ENCODE measurements at regions of chr22 and their contacts with region 1.

Region 1: DNA sequence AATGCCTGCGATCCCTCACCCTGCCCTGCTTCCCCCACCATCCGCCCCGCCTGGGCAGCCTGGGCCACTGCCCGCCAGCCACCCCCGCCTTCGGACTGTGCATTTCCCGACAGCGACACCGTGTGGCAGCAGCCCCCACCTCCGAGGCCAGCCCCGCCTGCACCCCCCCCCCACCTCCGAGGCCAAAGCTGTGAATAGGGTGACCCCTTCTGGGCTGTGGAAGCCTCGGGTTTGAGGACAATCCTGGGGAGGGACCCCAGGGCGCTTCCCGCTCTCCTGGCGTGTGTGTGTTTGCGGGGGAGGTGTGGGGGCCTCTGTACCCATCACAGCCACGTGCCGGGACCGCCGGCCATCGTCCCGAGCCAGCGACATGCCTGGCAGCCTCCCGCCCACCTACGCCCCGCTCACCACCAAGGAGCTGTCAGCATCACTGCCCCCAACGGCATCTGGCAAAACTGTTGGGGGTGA is 33.8 kb upstream of the PPARA start:
- DNase-seq: peak; percentile 97
- H3K4me3 ChIP-seq: no peak overlapping the region
- H3K27ac ChIP-seq: peak overlapping the region; percentile 75 to 92 (median 86)
- H3K4me1 ChIP-seq: peaks cover 0 to 73% (median 65%) of the 10 kb centered on the region in 4 donors
- H3K27me3 ChIP-seq: no peaks in the 10 kb centered on the region
- CTCF ChIP-seq: peak; percentile 94 to 98 (median 95)
- EP300 ChIP-seq: no peak
- POLR2A ChIP-seq: no peak

Region 2: GRCh38 chr22:45671768-45672563 is 444.6 kb before region 1 on chr22 and contains the start of gene ATXN10:
- intact Hi-C with region 1: loop called (anchors 10 kb)
- DNase-seq: peak; percentile 78
- H3K4me3 ChIP-seq: peak within 1 kb of the TSS; percentile 74 to 85 (median 81)
- H3K27ac ChIP-seq: peak within 1 kb of the TSS; percentile 76 to 88 (median 87)
- H3K4me1 ChIP-seq: peaks cover 0 to 45% (median 22%) of the 10 kb centered on the region in 4 donors
- H3K27me3 ChIP-seq: no peaks in the 10 kb centered on the region
- CTCF ChIP-seq: no peak
- EP300 ChIP-seq: no peak
- POLR2A ChIP-seq: peak in 1 of 2 donors; percentile 16
- total RNA-seq, gene ATXN10: 160 to 187 (median 185) TPM

Region 3: DNA sequence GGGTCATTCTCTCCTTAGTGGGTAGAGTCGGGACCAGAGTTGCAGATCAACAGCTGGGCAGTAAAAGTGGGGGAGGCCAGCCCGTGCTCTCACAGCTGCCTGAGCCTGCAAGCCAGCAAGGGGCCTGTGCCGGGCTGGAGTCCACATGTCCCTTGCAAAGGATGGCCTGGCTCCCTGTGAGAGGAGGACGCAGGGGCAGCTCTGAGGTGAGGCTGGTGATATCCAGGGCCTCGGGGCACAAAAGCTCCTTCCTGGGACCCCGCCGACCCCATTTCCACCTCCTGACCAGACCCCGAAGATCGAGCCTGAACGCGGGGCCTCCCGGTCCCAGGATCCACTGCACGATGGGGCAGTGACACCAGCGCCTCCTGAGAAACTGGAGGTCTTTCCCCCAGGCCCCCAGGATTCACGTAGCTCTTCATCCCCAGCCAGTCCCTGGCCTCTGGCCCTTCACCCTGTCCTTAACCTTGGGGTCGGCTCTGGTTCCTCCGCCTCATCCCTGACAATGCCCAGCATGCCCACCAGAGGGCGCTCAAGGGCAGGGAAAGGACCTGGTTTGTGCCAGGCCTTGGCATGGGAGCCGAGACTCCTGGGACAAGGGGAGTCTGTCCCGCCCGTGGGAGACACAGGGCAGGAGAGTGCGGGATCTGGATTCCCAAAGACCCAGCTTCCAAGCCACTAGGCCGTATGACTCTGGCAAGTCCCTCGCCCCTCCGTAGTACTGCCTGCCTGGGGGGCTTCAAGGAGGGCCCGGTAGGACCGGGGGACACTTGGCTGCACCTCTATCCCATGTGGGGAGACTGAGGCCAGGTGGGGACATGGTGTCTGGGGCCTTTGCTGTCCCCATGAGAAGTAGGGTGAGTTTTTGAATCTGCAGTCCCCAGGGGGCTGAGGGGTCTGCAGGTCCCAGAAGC is 121.8 kb before region 1 on chr22:
- intact Hi-C with region 1: loop called (anchors 2 kb)
- DNase-seq: peak; percentile 91
- H3K4me3 ChIP-seq: no peak overlapping the region
- H3K27ac ChIP-seq: peak overlapping the region in 2 of 4 donors; percentile 85
- H3K4me1 ChIP-seq: peaks cover 0 to 50% (median 47%) of the 10 kb centered on the region in 4 donors
- H3K27me3 ChIP-seq: no peaks in the 10 kb centered on the region
- CTCF ChIP-seq: peak; percentile 95 to 99 (median 97)
- EP300 ChIP-seq: no peak
- POLR2A ChIP-seq: no peak

Region 4: DNA sequence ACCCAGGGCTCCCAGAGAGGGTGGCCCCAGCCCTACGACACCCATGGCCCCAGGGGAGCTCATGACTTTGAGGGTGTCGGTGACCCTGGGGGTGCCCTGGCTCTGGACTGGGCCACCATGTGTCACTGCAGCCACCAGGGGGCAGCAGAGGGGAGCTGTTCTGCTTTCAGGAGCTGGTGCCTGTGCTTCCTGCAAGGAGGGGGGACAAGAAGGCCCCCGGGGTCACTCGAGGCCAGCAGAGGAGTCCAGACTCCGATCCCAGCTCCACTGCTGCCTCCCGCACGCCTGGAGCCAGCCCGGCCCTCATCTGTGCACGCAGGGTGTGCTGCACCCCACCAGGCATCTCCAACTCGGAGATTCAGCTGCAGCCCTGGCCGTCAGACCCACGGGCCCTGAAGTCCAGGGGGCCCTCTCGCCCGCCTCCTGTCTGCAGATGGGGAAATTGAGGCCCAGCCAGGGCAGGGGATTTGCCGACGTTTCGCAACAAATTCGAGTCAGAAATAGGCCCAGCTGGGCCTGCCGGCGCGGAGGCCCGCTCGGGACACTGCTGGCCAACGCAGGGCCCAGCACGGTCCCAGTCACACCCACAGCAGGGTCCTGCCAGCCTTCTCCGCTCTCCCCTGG is 110.0 kb before region 1 on chr22:
- intact Hi-C with region 1: loop called (anchors 1 kb)
- DNase-seq: peak; percentile 98
- H3K4me3 ChIP-seq: peak overlapping the region in 2 of 4 donors; percentile 10 to 17
- H3K27ac ChIP-seq: peak overlapping the region; percentile 91 to 99 (median 96)
- H3K4me1 ChIP-seq: peaks cover 0 to 33% (median 27%) of the 10 kb centered on the region in 4 donors
- H3K27me3 ChIP-seq: no peaks in the 10 kb centered on the region
- CTCF ChIP-seq: peak; percentile 96 to 98 (median 97)
- EP300 ChIP-seq: no peak
- POLR2A ChIP-seq: no peak

Region 5: GRCh38 chr22:46035742-46036557 is 80.6 kb before region 1 on chr22:
- intact Hi-C with region 1: loop called (anchors 2 kb)
- DNase-seq: peak; percentile 100
- H3K4me3 ChIP-seq: peak overlapping the region; percentile 76 to 86 (median 81)
- H3K27ac ChIP-seq: peak overlapping the region; percentile 95 to 98 (median 97)
- H3K4me1 ChIP-seq: peaks cover 0 to 16% (median 13%) of the 10 kb centered on the region in 4 donors
- H3K27me3 ChIP-seq: no peaks in the 10 kb centered on the region
- CTCF ChIP-seq: no peak
- EP300 ChIP-seq: peak in 1 of 4 donors; percentile 52
- POLR2A ChIP-seq: peak; percentile 97

Region 6: DNA sequence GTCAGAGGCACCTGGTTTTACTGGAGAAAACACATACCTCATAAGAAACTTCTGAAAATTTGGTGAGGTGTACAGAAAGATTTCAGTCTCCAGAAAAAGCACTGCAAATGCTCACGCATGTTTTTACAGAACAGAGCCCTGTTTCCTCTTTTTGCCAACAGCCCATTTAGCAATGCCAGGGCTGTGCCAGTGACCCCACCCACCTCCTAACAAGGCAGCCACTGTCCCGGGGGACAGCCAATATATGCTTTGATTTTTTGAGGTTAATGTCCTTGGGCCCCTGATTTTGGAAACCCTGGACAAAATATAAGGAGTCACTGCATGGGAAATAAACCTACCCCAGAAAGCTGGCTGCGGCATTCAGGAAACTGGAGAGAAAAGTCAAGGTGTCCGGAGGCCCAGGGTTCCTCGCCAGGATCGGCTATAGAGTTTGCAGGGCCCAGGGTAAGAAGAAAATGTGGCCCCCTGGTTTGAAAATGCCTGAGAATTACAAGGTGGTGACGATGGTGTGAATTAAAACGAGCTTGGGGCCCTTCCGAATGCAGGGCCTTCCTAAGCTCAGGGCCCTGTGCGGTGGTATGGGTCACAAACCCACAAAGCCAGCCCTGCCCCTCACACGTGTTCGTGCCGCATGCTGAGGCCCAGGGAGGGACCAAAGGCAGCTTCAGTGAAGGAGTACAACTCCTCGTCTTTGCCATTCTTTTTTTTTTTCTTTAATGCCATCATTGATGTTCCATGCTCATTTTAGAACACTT is 68.5 kb before region 1 on chr22:
- intact Hi-C with region 1: no loop called
- DNase-seq: peak; percentile 72
- H3K4me3 ChIP-seq: no peak overlapping the region
- H3K27ac ChIP-seq: peak overlapping the region; percentile 94 to 100 (median 97)
- H3K4me1 ChIP-seq: peaks cover 0 to 82% (median 80%) of the 10 kb centered on the region in 4 donors
- H3K27me3 ChIP-seq: no peaks in the 10 kb centered on the region
- CTCF ChIP-seq: no peak
- EP300 ChIP-seq: no peak
- POLR2A ChIP-seq: no peak

Region 7: GRCh38 chr22:46079861-46080821 is 36.4 kb before region 1 on chr22:
- intact Hi-C with region 1: loop called (anchors 2 kb)
- DNase-seq: peak; percentile 95
- H3K4me3 ChIP-seq: peak overlapping the region; percentile 44 to 88 (median 60)
- H3K27ac ChIP-seq: peak overlapping the region; percentile 96 to 99 (median 98)
- H3K4me1 ChIP-seq: peaks cover 0 to 100% (median 96%) of the 10 kb centered on the region in 4 donors
- H3K27me3 ChIP-seq: no peaks in the 10 kb centered on the region
- CTCF ChIP-seq: no peak
- EP300 ChIP-seq: peak in 1 of 4 donors; percentile 29
- POLR2A ChIP-seq: peak; percentile 37 to 39

Region 8: DNA sequence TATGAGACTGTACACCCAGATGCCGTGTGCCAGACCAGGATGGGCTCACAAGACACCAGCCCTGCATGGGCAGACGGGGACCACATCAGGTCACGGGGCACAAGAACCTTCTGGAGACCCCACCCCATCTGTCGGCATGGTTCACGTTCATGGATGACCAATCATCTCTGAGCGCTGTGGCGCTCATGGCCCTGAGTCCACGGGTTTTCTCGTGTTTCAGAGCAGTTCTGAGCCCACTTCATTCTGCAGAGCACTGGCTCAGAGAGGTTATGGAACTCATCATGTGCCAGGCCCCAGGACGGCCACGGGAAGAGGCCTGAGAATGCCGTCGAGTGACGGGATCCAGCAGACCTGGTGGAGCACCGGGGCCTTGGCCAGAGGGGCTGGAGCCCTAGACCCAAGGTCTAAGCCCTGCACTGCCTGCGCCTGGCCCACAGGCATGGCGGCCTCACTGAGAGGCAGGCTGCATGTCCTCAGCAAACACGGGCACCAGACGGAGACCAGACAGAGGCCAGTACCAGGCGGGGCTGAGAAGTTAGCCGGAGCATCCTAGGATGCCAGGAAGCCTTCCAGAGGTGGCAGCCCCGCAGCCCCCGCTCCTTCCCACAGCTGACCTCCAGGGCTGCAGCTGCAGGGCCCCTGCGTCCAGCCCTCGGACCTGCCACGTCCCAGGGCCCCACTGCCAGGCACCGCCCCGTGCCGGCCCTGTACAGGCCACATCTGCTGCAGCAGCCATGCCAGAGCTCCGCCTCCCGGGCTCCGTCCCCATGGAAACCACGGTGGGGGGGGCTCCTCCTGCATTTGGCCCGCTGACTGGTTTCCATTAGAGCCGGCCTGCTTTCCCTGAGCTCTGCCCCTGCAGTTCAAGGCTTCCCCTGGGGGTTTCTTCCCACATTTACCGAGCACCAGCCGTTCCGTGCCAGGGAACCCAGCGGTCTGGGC is 28.9 kb before region 1 on chr22:
- intact Hi-C with region 1: loop called (anchors 2 kb)
- DNase-seq: peak; percentile 98
- H3K4me3 ChIP-seq: peak overlapping the region in 3 of 4 donors; percentile 20 to 33 (median 32)
- H3K27ac ChIP-seq: peak overlapping the region; percentile 96 to 99 (median 98)
- H3K4me1 ChIP-seq: peaks cover 0 to 100% (median 100%) of the 10 kb centered on the region in 4 donors
- H3K27me3 ChIP-seq: no peaks in the 10 kb centered on the region
- CTCF ChIP-seq: no peak
- EP300 ChIP-seq: peak in 1 of 4 donors; percentile 11
- POLR2A ChIP-seq: peak in 1 of 2 donors; percentile 4